Testis (tissue), 5 donors: ENCODE measurements at regions of chr1 and their contacts with region 1.

Region 1: DNA sequence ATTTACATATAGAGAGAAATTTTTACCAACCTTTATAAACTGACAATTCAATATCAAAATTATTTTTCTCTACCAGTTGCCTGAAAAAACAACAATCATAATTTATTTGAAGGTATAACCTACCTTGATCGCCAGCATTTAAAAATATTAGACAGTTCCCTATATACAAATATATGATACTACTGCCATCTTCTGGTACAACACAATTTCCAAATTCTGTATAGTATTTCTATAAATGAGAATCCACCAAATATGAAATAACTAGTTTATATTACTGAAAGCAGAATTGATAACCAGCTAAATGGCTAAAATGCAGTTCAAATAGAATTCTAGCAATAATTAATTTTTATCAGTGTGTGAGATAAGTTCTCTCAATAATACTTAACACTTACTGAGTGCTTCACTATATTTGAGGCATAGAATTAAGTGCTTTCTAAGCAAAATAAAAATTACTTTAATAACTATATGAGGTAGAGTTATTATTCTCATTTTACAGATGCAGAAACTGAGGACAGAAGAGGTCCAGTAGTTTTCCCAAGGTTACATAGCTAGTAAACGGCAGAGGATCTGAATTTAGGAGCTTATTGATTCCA is 75.6 kb downstream of the PIGK start:
- DNase-seq: no peak
- H3K4me3 ChIP-seq: no peak overlapping the region
- H3K27ac ChIP-seq: no peak overlapping the region
- H3K4me1 ChIP-seq: no peaks in the 10 kb centered on the region
- H3K27me3 ChIP-seq: no peaks in the 10 kb centered on the region
- CTCF ChIP-seq: peak in 1 of 3 experiments; percentile 26
- POLR2A ChIP-seq: no peak

Region 2: GRCh38 chr1:77533660-77534305 is 390.2 kb after region 1 on chr1:
- intact Hi-C with region 1: loop called (anchors 10 kb)
- DNase-seq: peak; percentile 51
- H3K4me3 ChIP-seq: no peak overlapping the region
- H3K27ac ChIP-seq: no peak overlapping the region
- H3K4me1 ChIP-seq: peaks cover 3% of the 10 kb centered on the region
- H3K27me3 ChIP-seq: no peaks in the 10 kb centered on the region
- CTCF ChIP-seq: peak; percentile 57 to 91 (median 86)
- POLR2A ChIP-seq: no peak